PC-3 (cell line): ENCODE measurements at regions of chr14 and their contacts with region 1.

Region 1: GRCh38 chr14:54253195-54253947 is 143.4 kb upstream of the CDKN3 start:
- DNase-seq: peak; percentile 99
- ATAC-seq: peak; percentile 59
- H3K4me3 ChIP-seq: 0 out of 2 replicates have a peak overlapping the region, but pooled peaks have one; percentile 37
- H3K27ac ChIP-seq: peak overlapping the region; percentile 91
- H3K4me1 ChIP-seq: peaks cover 43% of the 10 kb centered on the region
- H3K27me3 ChIP-seq: no peaks in the 10 kb centered on the region
- CTCF ChIP-seq: no peak

Region 2: GRCh38 chr14:53295985-53296582 is 957.3 kb before region 1 on chr14:
- CTCF ChIA-PET with region 1: interaction called, 12 read pairs
- POLR2A ChIA-PET with region 1: no interaction called
- intact Hi-C with region 1: no loop called
- DNase-seq: peak; percentile 67
- ATAC-seq: peak; percentile 71
- H3K4me3 ChIP-seq: no peak overlapping the region
- H3K27ac ChIP-seq: no peak overlapping the region
- H3K4me1 ChIP-seq: no peaks in the 10 kb centered on the region
- H3K27me3 ChIP-seq: no peaks in the 10 kb centered on the region
- CTCF ChIP-seq: peak; percentile 85

Region 3: DNA sequence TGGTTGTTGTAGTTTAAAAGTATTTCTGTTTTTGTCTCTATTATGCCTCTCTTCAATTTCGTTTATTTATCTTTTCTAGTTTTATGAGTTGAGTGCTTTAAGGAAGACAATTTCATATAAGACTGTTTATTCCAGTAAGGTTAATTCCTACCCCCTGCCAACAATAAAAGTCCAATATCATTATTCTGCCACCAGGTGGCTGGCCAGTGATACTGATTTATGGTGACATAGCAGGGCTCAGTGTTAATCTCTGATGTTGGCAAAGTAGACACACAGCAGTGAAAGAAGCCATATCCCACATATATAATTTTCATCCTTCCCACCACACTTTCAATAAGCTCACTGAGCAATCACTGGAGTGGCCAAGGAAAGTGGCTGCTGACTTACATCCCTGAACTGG is 227.7 kb before region 1 on chr14:
- CTCF ChIA-PET with region 1: no interaction called
- POLR2A ChIA-PET with region 1: no interaction called
- intact Hi-C with region 1: loop called (anchors 2 kb)
- DNase-seq: peak; percentile 94
- ATAC-seq: peak; percentile 96
- H3K4me3 ChIP-seq: no peak overlapping the region
- H3K27ac ChIP-seq: no peak overlapping the region
- H3K4me1 ChIP-seq: peaks cover 13% of the 10 kb centered on the region
- H3K27me3 ChIP-seq: no peaks in the 10 kb centered on the region
- CTCF ChIP-seq: peak; percentile 97

Region 4: GRCh38 chr14:54175298-54175942 is 78.0 kb before region 1 on chr14:
- CTCF ChIA-PET with region 1: interaction called, 13 read pairs
- POLR2A ChIA-PET with region 1: interaction called, 6 read pairs
- intact Hi-C with region 1: loop called (anchors 1 kb)
- DNase-seq: peak; percentile 100
- ATAC-seq: peak; percentile 61
- H3K4me3 ChIP-seq: no peak overlapping the region
- H3K27ac ChIP-seq: no peak overlapping the region
- H3K4me1 ChIP-seq: peaks cover 73% of the 10 kb centered on the region
- H3K27me3 ChIP-seq: no peaks in the 10 kb centered on the region
- CTCF ChIP-seq: peak; percentile 100

Region 5: DNA sequence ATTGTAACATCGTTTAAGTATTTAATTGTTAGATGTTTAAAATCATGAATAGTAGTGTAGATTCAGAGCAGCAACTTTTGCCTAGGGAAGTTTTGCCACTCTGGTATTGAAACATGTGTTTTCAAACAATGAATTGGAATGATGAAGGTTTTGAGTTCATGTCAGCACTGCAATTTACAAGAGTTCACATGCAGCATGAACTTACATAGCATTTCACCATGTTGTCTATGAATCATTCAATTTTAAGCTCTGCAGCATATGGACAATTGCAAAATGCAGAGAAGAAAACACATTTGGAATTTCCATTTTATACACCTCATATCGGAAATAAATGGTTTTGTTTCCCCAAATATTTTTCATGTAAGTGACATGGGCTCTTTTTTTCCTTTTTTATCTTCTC is 27.3 kb before region 1 on chr14:
- CTCF ChIA-PET with region 1: no interaction called
- POLR2A ChIA-PET with region 1: interaction called, 3 read pairs
- intact Hi-C with region 1: loop called (anchors 2 kb)
- DNase-seq: no peak
- ATAC-seq: no peak
- H3K4me3 ChIP-seq: no peak overlapping the region
- H3K27ac ChIP-seq: no peak overlapping the region
- H3K4me1 ChIP-seq: no peaks in the 10 kb centered on the region
- H3K27me3 ChIP-seq: no peaks in the 10 kb centered on the region
- CTCF ChIP-seq: no peak

Region 6: GRCh38 chr14:54338696-54339317 is 85.4 kb after region 1 on chr14:
- CTCF ChIA-PET with region 1: interaction called, 18 read pairs
- POLR2A ChIA-PET with region 1: interaction called, 3 read pairs
- intact Hi-C with region 1: loop called (anchors 1 kb)
- DNase-seq: peak; percentile 93
- ATAC-seq: peak; percentile 79
- H3K4me3 ChIP-seq: no peak overlapping the region
- H3K27ac ChIP-seq: no peak overlapping the region
- H3K4me1 ChIP-seq: peaks cover 35% of the 10 kb centered on the region
- H3K27me3 ChIP-seq: no peaks in the 10 kb centered on the region
- CTCF ChIP-seq: peak; percentile 99